ENCODE measurements at regions of chr2 and their contacts with region 1.

Region 1: DNA sequence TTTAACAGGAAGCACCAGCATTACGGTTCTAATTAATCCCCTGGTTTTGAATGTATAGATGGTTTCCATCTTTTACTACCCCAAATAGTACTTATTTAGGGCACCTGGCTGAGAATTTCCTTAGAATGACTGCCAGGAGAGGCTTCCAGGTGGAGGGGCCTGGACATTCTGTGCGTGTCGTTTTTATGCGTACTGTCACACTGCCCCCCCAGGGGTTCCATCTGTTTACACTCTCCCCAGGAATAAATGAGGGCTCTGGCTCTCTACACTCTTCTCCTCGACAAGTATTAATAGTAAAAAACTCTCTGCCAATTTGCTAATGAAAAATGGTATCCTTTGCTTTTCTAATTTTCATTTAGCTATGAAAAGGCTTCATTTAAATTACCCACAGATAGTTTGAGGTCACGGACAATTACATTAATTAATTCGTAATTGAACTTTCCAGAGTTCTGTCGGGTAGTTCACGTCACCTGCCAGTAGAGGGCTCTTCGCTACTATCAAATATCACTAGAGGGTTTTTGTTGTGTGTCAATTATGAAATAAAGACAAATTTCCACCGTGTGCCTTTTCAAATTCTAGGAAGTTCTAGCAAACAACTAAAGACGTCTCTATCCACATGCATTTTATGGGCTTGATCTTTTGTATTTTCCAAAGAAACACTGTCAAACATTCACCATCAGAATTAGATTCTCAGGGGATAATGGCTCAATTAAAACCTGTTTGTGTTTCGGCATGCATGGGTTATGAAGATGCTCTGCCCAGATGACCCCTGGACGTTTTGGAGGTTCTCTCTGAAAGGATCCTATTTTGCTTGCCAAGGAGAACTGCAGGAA is 88.8 kb upstream of the ASB18 start:
- DNase-seq: peak; percentile 64
- H3K4me3 ChIP-seq: no peak overlapping the region
- H3K27ac ChIP-seq: no peak overlapping the region
- H3K4me1 ChIP-seq: no peaks in the 10 kb centered on the region
- CTCF ChIP-seq: peak; percentile 99

Region 2: GRCh38 chr2:236240228-236241038 is 112.5 kb before region 1 on chr2:
- CTCF ChIA-PET with region 1: no interaction called
- POLR2A ChIA-PET with region 1: no interaction called
- intact Hi-C with region 1: no loop called
- DNase-seq: no peak
- H3K4me3 ChIP-seq: no peak overlapping the region
- H3K27ac ChIP-seq: no peak overlapping the region
- H3K4me1 ChIP-seq: no peaks in the 10 kb centered on the region
- CTCF ChIP-seq: no peak

Region 3: DNA sequence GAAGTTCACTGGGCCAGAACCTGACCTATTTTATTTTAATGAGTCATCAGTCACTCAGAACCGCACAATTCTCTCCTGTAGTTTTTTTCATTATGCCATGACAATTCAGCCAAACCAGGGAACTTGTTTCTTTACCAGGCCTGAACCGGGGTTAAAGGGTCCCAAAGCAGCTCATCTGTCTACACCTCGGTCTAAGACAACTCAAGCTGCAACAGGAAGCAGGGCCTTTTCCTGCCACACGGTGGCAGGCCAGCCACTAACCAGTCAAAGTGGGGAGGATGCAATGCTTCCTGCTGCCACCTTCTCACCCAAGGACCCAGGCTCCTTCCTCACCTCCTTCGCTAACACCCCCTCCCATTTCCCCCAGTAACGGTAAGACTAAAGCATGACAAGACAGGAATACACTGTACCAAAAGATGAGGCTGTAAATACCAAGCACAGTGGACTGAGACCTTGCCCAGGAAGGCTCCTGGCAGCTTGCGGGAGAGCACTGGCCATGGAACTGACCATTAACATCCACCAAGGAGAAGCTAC is 160.0 kb after region 1 on chr2:
- CTCF ChIA-PET with region 1: no interaction called
- POLR2A ChIA-PET with region 1: no interaction called
- intact Hi-C with region 1: loop called (anchors 5 kb)
- DNase-seq: peak; percentile 86
- H3K4me3 ChIP-seq: no peak overlapping the region
- H3K27ac ChIP-seq: no peak overlapping the region
- H3K4me1 ChIP-seq: peaks cover 12% of the 10 kb centered on the region
- CTCF ChIP-seq: peak; percentile 95